IMR-90 (cell line): ENCODE measurements at regions of chr15 and their contacts with region 1.

Region 1: DNA sequence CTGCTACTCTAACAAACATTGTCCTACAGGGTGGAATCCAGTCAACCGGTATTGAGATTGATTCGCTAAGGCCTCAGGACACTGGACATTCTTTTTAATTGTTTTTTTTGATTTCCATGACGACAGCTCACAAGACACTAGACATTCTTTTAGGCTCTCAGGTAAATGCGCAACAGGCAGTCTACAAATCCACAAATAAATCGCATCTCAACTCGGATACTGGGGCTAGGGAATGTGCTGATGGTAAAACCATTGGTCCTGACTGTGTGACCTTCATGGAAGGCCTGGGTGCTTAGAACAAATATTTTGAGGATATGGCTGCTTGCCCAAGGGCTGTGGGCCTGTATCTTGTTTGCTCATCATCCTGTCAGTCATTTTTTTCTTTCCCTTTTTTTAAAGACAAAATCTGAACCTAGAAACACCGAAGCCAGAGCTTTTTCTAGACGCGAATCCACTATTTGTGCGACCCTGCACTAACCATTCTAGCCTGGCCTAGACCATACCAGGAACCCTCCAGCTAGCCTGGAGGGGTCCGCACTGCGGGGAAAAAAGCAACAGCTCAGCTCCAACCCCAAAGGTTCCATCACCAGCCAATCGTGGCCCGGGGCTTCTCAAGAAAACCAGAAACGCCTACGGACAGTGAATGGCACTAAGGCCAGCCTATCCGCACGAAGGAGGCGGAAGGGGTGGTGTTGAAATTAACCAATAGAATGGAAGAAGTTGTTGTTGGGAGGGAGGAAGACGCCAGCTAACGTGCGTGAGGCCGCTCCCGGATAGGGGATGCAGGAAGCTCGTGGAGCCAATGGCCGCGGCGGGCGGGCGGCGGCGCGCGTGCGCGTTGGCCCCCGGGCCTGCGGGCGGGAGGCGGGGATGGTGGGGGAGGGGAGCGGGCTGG is 18.1 kb upstream of the CHD2 start:
- DNase-seq: peak; percentile 100
- ATAC-seq: peak; percentile 94
- H3K4me3 ChIP-seq: peak overlapping the region; percentile 99
- H3K27ac ChIP-seq: peak overlapping the region; percentile 82
- H3K4me1 ChIP-seq: peaks cover 7% of the 10 kb centered on the region
- H3K27me3 ChIP-seq: no peaks in the 10 kb centered on the region
- CTCF ChIP-seq: no peak
- POLR2A ChIP-seq: 0 out of 2 replicates have a peak, but pooled peaks have one; percentile 44
- RAD21 ChIP-seq: no peak

Region 2: GRCh38 chr15:92820236-92821021 is 61.6 kb before region 1 on chr15:
- CTCF ChIA-PET with region 1: no interaction called
- POLR2A ChIA-PET with region 1: interaction called, 14 read pairs
- dilution Hi-C with region 1: no loop called
- in situ Hi-C with region 1: no loop called
- intact Hi-C with region 1: no loop called
- DNase-seq: peak; percentile 89
- ATAC-seq: peak; percentile 91
- H3K4me3 ChIP-seq: peak overlapping the region; percentile 42
- H3K27ac ChIP-seq: peak overlapping the region; percentile 87
- H3K4me1 ChIP-seq: peaks cover 13% of the 10 kb centered on the region
- H3K27me3 ChIP-seq: no peaks in the 10 kb centered on the region
- CTCF ChIP-seq: no peak
- POLR2A ChIP-seq: peak; percentile 66; the same call in 1 of the 2 replicates
- RAD21 ChIP-seq: no peak

Region 3: DNA sequence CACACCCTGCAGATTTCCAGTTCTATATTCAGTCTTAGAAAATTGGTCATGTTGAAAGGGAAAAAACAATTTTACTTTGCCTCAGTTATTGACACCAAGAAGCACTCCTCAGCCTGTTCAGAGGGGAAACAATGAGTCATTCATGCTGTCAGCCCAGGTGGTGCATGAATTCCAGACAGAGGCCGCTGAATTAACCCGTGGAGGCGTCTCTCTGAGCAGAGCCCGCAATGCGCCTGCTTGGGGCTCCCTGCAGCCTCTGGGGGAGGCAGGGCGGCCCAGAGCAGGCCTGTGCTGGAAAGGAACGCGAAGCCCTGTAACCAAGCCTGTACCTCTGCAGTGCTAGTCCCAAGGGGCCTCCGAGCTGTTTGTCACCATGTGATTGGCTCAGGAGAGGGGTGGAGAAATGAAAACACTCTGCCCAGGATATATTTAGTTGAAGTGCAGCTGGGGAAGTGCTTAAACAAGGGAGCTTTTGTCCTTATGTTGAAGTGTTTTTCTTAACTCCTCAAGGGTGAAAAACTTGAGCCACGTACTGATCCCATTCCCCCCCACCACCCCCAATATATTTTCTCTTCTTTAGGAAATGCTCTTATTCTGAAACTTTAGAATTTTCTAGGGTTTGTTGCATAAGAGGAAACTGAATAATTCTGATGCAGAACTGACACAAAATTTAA is 50.3 kb before region 1 on chr15:
- CTCF ChIA-PET with region 1: no interaction called
- POLR2A ChIA-PET with region 1: interaction called, 6 read pairs
- dilution Hi-C with region 1: no loop called
- in situ Hi-C with region 1: no loop called
- intact Hi-C with region 1: loop called (anchors 1 kb)
- DNase-seq: peak; percentile 95
- ATAC-seq: peak; percentile 99
- H3K4me3 ChIP-seq: peak overlapping the region; percentile 22; the same call in 1 of the 2 replicates
- H3K27ac ChIP-seq: peak overlapping the region; percentile 90
- H3K4me1 ChIP-seq: peaks cover 12% of the 10 kb centered on the region
- H3K27me3 ChIP-seq: no peaks in the 10 kb centered on the region
- CTCF ChIP-seq: no peak
- POLR2A ChIP-seq: peak; percentile 42; the same call in 1 of the 2 replicates
- RAD21 ChIP-seq: no peak

Region 4: DNA sequence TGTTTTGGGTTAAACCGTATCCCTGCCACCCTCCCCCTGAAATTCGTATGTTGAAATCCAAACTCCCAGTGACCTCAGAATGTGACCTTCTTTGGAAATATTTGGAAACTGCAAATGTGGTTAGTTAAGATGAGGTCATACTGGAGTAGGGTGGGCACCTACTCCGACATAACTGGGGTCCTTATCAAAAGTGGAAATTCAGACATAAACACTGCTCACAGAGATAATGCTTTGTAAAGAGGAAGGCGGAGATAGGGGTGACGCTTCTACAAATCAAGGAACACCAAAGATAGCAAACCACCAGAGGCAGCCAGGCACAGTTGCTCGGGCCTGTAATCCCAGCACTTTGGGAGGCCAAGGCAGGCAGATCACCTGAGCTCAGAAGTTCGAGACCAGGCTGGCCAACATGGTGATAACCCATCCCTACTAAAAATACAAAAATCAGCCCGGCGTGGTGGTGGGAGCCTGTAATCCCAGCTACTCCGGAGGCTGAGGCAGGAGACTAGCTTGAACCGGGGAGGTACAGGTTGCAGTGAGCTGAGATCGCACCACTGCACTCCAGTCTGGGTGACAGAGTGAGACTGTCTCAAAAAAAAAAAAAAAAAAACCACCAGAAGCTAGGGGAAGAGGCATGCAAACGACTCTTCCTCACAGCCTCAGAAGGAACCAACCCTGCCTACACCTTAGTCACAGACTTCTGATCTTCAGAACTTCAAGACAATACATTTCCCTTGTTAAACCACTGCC is 33.0 kb before region 1 on chr15:
- CTCF ChIA-PET with region 1: no interaction called
- POLR2A ChIA-PET with region 1: interaction called, 3 read pairs
- dilution Hi-C with region 1: no loop called
- in situ Hi-C with region 1: no loop called
- intact Hi-C with region 1: loop called (anchors 1 kb)
- DNase-seq: peak; percentile 94
- ATAC-seq: peak; percentile 80
- H3K4me3 ChIP-seq: no peak overlapping the region
- H3K27ac ChIP-seq: peak overlapping the region; percentile 86
- H3K4me1 ChIP-seq: peaks cover 18% of the 10 kb centered on the region
- H3K27me3 ChIP-seq: no peaks in the 10 kb centered on the region
- CTCF ChIP-seq: no peak
- POLR2A ChIP-seq: no peak
- RAD21 ChIP-seq: no peak

Region 5: DNA sequence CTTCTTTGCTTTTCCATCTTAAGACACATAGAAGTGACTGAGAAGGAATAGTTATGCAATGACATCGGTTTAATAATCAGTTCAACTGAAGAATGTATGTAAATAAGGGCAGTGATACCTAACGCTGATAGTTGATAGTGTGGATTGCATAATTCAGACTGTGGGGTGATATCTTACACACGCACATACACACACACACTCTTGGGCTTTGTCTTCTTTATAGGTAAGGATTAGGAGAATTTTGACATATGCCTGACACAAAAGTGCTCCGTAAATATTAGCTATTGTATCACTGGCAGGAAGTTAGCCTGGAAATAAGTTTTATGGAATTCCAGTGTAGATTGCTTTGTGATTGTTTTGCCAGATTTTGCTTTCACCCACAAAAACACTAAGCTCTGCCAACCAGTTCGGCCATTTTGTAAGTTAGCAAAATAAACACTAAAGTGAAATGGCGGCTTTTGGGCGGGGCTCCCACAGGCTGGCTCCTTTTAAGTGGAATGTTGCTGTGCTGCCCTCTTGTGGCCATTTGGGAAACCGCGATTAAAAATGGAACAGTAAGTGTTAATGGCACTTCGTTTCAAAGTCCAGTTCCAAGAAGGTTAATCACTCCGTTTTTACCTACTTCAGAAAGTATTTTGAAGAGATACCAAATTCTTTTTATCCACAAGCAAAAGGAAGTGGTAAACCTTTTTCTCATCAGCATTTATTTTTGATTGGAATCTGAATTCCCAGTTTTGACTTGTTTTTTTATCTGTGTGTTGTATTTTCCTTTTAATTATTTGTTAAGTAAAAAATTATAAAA is 35.8 kb after region 1 on chr15:
- CTCF ChIA-PET with region 1: no interaction called
- POLR2A ChIA-PET with region 1: no interaction called
- dilution Hi-C with region 1: no loop called
- in situ Hi-C with region 1: no loop called
- intact Hi-C with region 1: no loop called
- DNase-seq: peak; percentile 93
- ATAC-seq: peak; percentile 61
- H3K4me3 ChIP-seq: no peak overlapping the region
- H3K27ac ChIP-seq: peak overlapping the region; percentile 88; the same call in 1 of the 2 replicates
- H3K4me1 ChIP-seq: peaks cover 31% of the 10 kb centered on the region
- H3K27me3 ChIP-seq: no peaks in the 10 kb centered on the region
- CTCF ChIP-seq: peak; percentile 94
- POLR2A ChIP-seq: peak; percentile 33; the same call in 1 of the 2 replicates
- RAD21 ChIP-seq: peak; percentile 85

Region 6: DNA sequence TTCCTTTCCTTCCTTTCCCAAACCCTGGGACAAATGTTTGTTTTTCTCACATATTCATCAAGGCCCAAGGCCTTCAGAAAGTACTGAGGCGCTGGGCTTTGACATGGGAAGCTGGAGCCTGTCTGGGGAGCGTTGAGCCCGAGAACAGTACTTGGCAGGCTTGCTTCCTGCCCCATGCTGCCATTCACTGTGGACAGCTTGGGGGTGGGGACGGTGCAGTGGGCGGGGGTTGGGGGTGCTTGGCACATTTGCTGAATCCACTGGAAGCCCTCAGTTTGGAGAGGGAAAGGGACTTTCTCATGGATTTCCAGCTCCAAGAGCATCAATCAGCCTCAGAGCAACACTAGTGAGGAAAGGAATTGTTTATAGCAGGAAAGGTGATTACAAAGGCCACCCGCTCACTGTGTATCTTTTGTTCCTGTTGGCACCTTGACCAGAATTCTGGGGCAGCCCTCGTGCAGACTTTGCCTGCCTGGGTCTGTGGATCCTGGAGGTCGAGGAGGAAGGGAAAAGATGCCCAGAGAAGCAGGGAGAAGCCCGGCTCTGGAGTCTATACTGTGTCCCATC is 406.8 kb after region 1 on chr15:
- CTCF ChIA-PET with region 1: no interaction called
- POLR2A ChIA-PET with region 1: no interaction called
- dilution Hi-C with region 1: no loop called
- in situ Hi-C with region 1: no loop called
- intact Hi-C with region 1: no loop called
- DNase-seq: no peak
- ATAC-seq: no peak
- H3K4me3 ChIP-seq: no peak overlapping the region
- H3K27ac ChIP-seq: no peak overlapping the region
- H3K4me1 ChIP-seq: no peaks in the 10 kb centered on the region
- H3K27me3 ChIP-seq: no peaks in the 10 kb centered on the region
- CTCF ChIP-seq: no peak
- POLR2A ChIP-seq: no peak
- RAD21 ChIP-seq: no peak